ENCODE measurements at regions of chr15 and their contacts with region 1.

Region 1: DNA sequence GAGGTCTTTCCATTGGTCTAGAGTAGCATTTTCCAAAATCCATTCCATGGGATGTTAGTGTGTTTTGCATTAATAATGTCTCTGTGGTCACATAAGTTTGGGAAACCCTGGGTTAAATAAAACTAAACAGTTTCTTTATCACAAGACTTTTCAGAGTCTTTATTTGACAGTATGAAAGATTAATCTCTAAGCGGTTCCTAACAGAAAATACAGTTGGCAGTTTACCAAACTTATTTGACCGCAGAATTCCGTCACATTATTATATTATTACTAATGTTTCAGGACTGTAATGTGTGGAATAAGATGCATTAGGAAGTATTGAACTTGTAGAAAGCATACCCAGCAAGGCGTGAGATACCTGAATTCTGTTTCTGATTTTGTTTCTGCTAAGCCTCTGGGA is 71.5 kb upstream of the ADAMTSL3 start:
- DNase-seq: no peak
- ATAC-seq: no peak
- H3K4me3 ChIP-seq: no peak overlapping the region
- H3K27ac ChIP-seq: no peak overlapping the region
- H3K4me1 ChIP-seq: no peaks in the 10 kb centered on the region
- H3K27me3 ChIP-seq: no peaks in the 10 kb centered on the region

Region 2: DNA sequence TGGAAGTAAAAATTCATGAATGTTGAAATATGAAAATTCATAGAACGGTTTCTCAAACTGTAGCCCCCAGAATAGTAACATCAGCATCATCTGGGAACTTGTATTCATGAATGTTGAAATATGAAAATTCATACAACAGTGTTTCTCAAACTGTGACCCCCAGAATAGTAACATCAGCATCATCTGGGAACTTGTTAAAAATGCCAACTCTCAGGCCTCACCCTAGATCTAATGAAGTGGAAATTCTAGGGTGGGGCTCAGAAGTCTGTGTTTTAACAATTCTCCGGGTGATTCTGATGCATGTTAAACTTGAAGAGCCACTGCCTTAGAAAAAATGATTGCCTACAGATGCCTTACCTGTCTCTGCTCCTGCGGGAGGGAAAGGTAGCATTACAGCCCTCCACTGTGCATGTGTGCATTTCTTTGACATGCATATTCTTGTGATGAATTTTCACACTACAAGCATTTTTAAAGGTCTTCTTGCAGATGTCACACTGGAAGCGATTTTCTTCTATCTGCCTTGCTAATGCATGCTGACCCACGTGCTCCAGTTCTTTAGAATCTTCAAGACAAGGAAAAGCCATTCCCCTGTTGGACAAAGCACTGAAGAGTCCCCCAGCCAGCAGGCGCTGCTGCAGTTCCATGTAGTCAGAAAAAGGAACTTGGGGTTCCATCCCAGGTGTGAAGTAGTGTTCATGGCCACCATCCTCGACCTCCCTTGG is 319.6 kb before region 1 on chr15:
- intact Hi-C with region 1: no loop called
- DNase-seq: no peak
- ATAC-seq: no peak
- H3K4me3 ChIP-seq: no peak overlapping the region
- H3K27ac ChIP-seq: no peak overlapping the region
- H3K4me1 ChIP-seq: no peaks in the 10 kb centered on the region
- H3K27me3 ChIP-seq: no peaks in the 10 kb centered on the region

Region 3: GRCh38 chr15:83644439-83644838 is 62.1 kb after region 1 on chr15:
- intact Hi-C with region 1: loop called in 1 of 4 experiments (anchors 10 kb)
- DNase-seq: no peak
- ATAC-seq: no peak
- H3K4me3 ChIP-seq: no peak overlapping the region
- H3K27ac ChIP-seq: no peak overlapping the region
- H3K4me1 ChIP-seq: no peaks in the 10 kb centered on the region
- H3K27me3 ChIP-seq: no peaks in the 10 kb centered on the region

Measured in right cardiac atrium (tissue), 5 donors.